Posterior vena cava (tissue), 2 donors: ENCODE measurements at regions of chr19 and their contacts with region 1.

Region 1: GRCh38 chr19:19138169-19138981 is at the start of gene TMEM161A:
- DNase-seq: peak; percentile 99
- total RNA-seq, gene TMEM161A: 14.0 to 20.1 TPM

Region 2: DNA sequence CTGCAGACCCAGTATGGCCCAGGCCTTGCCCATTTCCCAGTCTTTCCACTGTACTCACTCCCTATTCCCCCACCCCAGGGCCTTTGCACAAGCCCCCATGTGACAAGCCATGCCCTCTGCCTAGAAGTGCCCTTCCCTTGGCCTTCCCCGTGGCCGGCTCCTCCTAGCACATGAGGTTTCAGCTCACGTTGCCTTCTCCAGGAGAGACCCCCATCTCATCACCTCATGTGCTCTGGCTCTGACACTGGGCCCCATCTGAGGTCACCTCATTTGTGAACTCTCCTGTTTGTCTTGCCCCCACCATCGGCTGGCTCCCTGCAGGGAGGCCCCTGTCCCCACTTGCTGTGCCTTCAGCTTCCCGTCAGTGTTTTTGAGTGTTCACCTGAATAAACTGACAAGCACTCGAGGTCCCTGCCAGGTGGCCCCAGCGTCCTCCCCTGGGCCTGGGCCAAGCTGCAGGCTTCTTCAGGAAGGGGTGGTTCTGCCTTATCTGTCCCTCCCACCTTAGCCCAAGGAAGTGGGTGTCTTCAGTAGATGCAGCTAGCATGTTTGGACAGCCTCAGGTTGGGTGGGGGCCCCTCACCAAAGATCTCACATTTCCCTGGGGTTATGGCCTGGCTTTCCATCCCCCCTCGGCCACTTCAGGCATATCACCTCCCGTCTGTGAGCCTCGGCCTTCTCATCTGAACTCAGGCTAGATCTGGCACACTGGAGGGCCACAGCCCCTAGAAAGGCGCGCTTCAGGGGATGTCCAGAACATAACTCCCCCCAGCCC is 78.4 kb before region 1 on chr19:
- intact Hi-C with region 1: loop called (anchors 5 to 10 kb)
- DNase-seq: no peak

Region 3: GRCh38 chr19:19165396-19165795 is 27.0 kb after region 1 on chr19:
- intact Hi-C with region 1: loop called in 1 of 2 experiments (anchors 1 kb)
- DNase-seq: no peak

Region 4: GRCh38 chr19:19877724-19878123 is 739.3 kb after region 1 on chr19:
- intact Hi-C with region 1: loop called in 1 of 2 experiments (anchors 5 kb)
- DNase-seq: no peak